Dorsolateral prefrontal cortex (tissue), 120 donors: ENCODE measurements at regions of chr2 and their contacts with region 1.

Region 1: GRCh38 chr2:36729067-36729466 is 32.6 kb downstream of the VIT start:
- DNase-seq: no peak
- H3K4me3 ChIP-seq: no peak overlapping the region
- H3K27ac ChIP-seq: no peak overlapping the region
- H3K27me3 ChIP-seq: no peaks in the 10 kb centered on the region
- CTCF ChIP-seq: no peak

Region 2: GRCh38 chr2:36245651-36246050 is 483.4 kb before region 1 on chr2:
- intact Hi-C with region 1: no loop called
- DNase-seq: no peak
- H3K4me3 ChIP-seq: no peak overlapping the region
- H3K27ac ChIP-seq: no peak overlapping the region
- H3K27me3 ChIP-seq: no peaks in the 10 kb centered on the region
- CTCF ChIP-seq: no peak

Region 3: DNA sequence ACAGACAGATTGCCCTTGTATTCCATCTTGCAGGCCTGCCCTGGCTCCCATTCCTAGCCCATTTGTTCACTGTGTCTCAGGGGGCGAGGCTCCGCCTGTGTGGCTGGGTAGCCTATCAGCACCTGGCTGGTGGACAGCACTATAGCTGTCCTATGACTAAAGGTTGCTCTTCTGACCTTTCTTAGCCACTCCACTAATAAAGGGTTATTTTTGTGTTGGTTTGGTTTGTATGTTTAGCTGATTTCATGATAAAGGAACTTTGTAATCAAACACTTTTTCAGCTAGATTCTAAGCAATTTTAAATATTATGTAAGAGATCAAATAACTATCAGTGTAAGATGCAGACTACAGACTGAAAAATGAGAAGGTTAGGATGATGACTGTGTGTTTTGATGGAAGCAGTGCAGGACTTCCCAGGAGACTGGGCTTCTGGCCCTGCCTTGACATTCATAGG is 301.2 kb before region 1 on chr2:
- intact Hi-C with region 1: loop called in 1 of 2 experiments (anchors 5 kb)
- DNase-seq: no peak
- H3K4me3 ChIP-seq: no peak overlapping the region
- H3K27ac ChIP-seq: no peak overlapping the region
- H3K27me3 ChIP-seq: no peaks in the 10 kb centered on the region
- CTCF ChIP-seq: no peak